Gastrocnemius medialis (tissue), 4 donors: ENCODE measurements at regions of chr15 and their contacts with region 1.

Region 1: GRCh38 chr15:94163999-94164807 is 67.2 kb upstream of the MCTP2 start:
- DNase-seq: no peak
- ATAC-seq: no peak
- H3K4me3 ChIP-seq: no peak overlapping the region
- H3K27ac ChIP-seq: no peak overlapping the region
- H3K4me1 ChIP-seq: no peaks in the 10 kb centered on the region
- H3K27me3 ChIP-seq: no peaks in the 10 kb centered on the region
- CTCF ChIP-seq: peak; percentile 30 to 58 (median 43)
- POLR2A ChIP-seq: no peak

Region 2: GRCh38 chr15:94317201-94317600 is 153.0 kb after region 1 on chr15:
- in situ Hi-C with region 1: loop called in 1 of 4 experiments (anchors 10 kb)
- intact Hi-C with region 1: no loop called
- DNase-seq: no peak
- ATAC-seq: no peak
- H3K4me3 ChIP-seq: no peak overlapping the region
- H3K27ac ChIP-seq: no peak overlapping the region
- H3K4me1 ChIP-seq: no peaks in the 10 kb centered on the region
- H3K27me3 ChIP-seq: no peaks in the 10 kb centered on the region
- CTCF ChIP-seq: no peak
- POLR2A ChIP-seq: no peak